ENCODE measurements at regions of chr11 and their contacts with region 1.

Region 1: DNA sequence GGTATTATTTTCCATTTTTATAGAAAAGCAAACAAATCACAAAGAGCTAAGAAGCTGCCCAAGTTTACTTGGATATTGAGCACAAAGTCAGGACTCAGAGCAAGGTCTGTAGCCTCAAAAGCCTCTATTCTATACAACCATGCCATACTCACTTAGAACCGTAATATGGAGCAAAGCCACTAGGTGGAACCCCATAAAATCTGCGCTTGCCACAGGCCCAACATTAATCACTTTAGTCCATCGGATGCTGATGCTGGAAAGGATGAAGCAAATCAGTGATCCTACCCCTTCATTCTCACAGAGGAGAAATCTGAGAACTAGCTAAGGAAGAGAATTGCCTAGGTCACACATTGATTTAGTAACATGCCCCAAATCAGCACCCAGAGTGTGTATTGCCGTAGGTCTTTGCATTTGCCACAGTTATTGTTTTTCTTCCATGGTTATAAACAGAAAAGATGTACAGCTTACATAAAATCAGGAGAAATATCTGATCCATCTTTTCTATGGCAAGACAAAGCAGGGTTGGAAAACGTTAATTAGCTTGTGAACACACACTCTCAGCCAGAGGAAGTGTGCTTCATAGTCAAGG is 56.7 kb upstream of the RAB38 start:
- DNase-seq: peak; percentile 13
- H3K4me3 Mint-ChIP-seq: no peak overlapping the region
- H3K27ac Mint-ChIP-seq: no peak overlapping the region
- H3K4me1 Mint-ChIP-seq: no peaks in the 10 kb centered on the region
- H3K27me3 Mint-ChIP-seq: no peaks in the 10 kb centered on the region

Region 2: GRCh38 chr11:88016392-88017170 is 215.4 kb before region 1 on chr11:
- CTCF ChIA-PET with region 1: interaction called, 4 read pairs
- POLR2A ChIA-PET with region 1: no interaction called
- intact Hi-C with region 1: loop called (anchors 1 kb)
- DNase-seq: peak; percentile 64
- H3K4me3 Mint-ChIP-seq: no peak overlapping the region
- H3K27ac Mint-ChIP-seq: no peak overlapping the region
- H3K4me1 Mint-ChIP-seq: no peaks in the 10 kb centered on the region
- H3K27me3 Mint-ChIP-seq: no peaks in the 10 kb centered on the region

Region 3: DNA sequence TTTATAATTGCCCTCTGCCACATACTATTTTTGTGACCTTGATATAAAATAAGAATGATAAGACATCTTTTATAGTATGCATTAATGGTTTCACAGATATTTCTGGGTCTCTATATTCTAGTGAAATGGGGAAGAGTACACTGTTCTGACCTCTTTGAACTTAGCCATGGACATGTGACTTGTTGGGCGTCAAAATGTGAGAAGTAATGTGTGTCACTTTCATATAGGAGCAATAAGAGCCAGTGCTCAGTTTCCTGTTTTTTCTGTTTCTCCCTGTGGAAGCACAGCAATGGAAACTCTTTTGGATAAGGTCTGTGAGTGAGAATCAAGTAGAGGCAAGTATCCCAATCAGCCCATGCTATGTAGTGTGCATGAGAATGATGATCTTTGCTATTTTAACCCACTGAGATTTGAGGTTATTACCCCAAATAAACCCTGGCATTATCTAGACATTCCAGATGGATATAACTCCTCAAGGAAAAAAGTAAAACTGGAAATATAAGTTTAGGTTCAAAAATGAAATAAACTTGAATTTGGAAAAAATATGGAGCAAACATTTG is 117.4 kb before region 1 on chr11:
- CTCF ChIA-PET with region 1: no interaction called
- POLR2A ChIA-PET with region 1: no interaction called
- intact Hi-C with region 1: no loop called
- DNase-seq: no peak
- H3K4me3 Mint-ChIP-seq: no peak overlapping the region
- H3K27ac Mint-ChIP-seq: no peak overlapping the region
- H3K4me1 Mint-ChIP-seq: no peaks in the 10 kb centered on the region
- H3K27me3 Mint-ChIP-seq: no peaks in the 10 kb centered on the region

Region 4: GRCh38 chr11:88266919-88267318 is 34.9 kb after region 1 on chr11:
- CTCF ChIA-PET with region 1: no interaction called
- POLR2A ChIA-PET with region 1: no interaction called
- intact Hi-C with region 1: no loop called
- DNase-seq: no peak
- H3K4me3 Mint-ChIP-seq: no peak overlapping the region
- H3K27ac Mint-ChIP-seq: no peak overlapping the region
- H3K4me1 Mint-ChIP-seq: no peaks in the 10 kb centered on the region
- H3K27me3 Mint-ChIP-seq: no peaks in the 10 kb centered on the region

Region 5: GRCh38 chr11:88689548-88690240 is 457.7 kb after region 1 on chr11:
- CTCF ChIA-PET with region 1: no interaction called
- POLR2A ChIA-PET with region 1: no interaction called
- intact Hi-C with region 1: loop called (anchors 5 kb)
- DNase-seq: no peak
- H3K4me3 Mint-ChIP-seq: no peak overlapping the region
- H3K27ac Mint-ChIP-seq: no peak overlapping the region
- H3K4me1 Mint-ChIP-seq: no peaks in the 10 kb centered on the region
- H3K27me3 Mint-ChIP-seq: no peaks in the 10 kb centered on the region

Measured in activated CD4-positive, alpha-beta memory T cell treated with anti-CD3 and anti-CD28 coated beads for 36 hours (primary cell).